ENCODE measurements at regions of chr13 and their contacts with region 1.

Region 1: GRCh38 chr13:76991796-76992547 is at the start of gene CLN5:
- DNase-seq: peak; percentile 97
- H3K4me3 Mint-ChIP-seq: peak within 1 kb of the TSS; percentile 97
- H3K27ac Mint-ChIP-seq: peak within 1 kb of the TSS; percentile 98
- H3K4me1 Mint-ChIP-seq: peaks cover 32% of the 10 kb centered on the region
- H3K27me3 Mint-ChIP-seq: no peaks in the 10 kb centered on the region

Region 2: DNA sequence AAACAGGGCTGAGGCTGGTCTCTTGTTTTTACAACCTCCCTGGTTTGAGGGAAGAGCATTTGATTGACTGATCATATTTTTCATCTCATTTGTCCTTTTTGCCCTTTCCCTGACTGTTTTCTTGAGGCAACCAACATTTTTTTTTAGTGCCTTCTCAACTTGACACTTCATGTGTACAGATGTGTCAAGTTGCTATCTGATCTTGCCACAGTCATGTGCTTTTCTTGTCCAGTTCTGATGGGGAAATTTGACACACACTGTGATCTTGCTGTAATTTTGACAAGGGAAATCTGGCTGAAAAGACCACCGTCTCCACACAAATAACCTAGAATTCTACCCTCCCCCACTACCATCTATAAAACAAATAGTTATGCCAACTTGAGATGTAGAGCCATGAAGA is 435.3 kb before region 1 on chr13:
- CTCF ChIA-PET with region 1: no interaction called
- DNase-seq: no peak
- H3K4me3 Mint-ChIP-seq: no peak overlapping the region
- H3K27ac Mint-ChIP-seq: no peak overlapping the region
- H3K4me1 Mint-ChIP-seq: no peaks in the 10 kb centered on the region
- H3K27me3 Mint-ChIP-seq: no peaks in the 10 kb centered on the region

Region 3: GRCh38 chr13:76980075-76980718 is 11.8 kb before region 1 on chr13:
- CTCF ChIA-PET with region 1: interaction called, 11 read pairs
- DNase-seq: peak; percentile 88
- H3K4me3 Mint-ChIP-seq: peak overlapping the region; percentile 31
- H3K27ac Mint-ChIP-seq: no peak overlapping the region
- H3K4me1 Mint-ChIP-seq: peaks cover 11% of the 10 kb centered on the region
- H3K27me3 Mint-ChIP-seq: peaks cover 66% of the 10 kb centered on the region

Measured in activated naive CD4-positive, alpha-beta T cell treated with anti-CD3 and anti-CD28 coated beads, Interleukin-2, amount 10 ng/mL, durations not matched to agents 7 days and 5 days (primary cell).